Dorsolateral prefrontal cortex (tissue), 120 donors: ENCODE measurements at regions of chr12 and their contacts with region 1.

Region 1: GRCh38 chr12:12474931-12475795 is 87.5 kb downstream of the DUSP16 start:
- DNase-seq: no peak
- H3K4me3 ChIP-seq: peak overlapping the region in 1 of 59 donors; percentile 13
- H3K27ac ChIP-seq: peak overlapping the region in 58 of 59 donors; percentile 22 to 95 (median 88)
- H3K27me3 ChIP-seq: no peaks in the 10 kb centered on the region
- CTCF ChIP-seq: no peak

Region 2: DNA sequence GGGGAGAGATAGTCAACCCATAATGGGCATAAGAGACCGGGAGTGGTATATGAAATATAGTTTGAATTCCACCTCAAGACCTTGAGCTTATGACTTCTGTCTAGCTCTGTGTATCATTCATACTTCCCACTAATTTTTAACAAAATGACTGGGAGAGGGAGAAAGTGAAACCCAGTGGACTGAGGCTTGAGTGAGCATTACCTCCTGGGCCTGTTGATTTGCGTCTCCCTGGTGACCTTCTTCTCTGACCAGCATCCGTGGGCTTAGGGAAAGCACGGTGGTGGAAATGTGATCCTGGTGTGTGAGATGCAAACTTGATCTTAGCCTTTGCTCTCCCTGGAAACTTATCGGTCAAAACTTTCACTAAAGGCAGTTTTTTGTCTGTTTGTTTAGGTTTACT is 612.4 kb before region 1 on chr12:
- intact Hi-C with region 1: no loop called
- DNase-seq: no peak
- H3K4me3 ChIP-seq: peak overlapping the region in 1 of 59 donors; percentile 20
- H3K27ac ChIP-seq: peak overlapping the region in 54 of 59 donors; percentile 3 to 88 (median 74)
- H3K27me3 ChIP-seq: no peaks in the 10 kb centered on the region
- CTCF ChIP-seq: no peak

Region 3: DNA sequence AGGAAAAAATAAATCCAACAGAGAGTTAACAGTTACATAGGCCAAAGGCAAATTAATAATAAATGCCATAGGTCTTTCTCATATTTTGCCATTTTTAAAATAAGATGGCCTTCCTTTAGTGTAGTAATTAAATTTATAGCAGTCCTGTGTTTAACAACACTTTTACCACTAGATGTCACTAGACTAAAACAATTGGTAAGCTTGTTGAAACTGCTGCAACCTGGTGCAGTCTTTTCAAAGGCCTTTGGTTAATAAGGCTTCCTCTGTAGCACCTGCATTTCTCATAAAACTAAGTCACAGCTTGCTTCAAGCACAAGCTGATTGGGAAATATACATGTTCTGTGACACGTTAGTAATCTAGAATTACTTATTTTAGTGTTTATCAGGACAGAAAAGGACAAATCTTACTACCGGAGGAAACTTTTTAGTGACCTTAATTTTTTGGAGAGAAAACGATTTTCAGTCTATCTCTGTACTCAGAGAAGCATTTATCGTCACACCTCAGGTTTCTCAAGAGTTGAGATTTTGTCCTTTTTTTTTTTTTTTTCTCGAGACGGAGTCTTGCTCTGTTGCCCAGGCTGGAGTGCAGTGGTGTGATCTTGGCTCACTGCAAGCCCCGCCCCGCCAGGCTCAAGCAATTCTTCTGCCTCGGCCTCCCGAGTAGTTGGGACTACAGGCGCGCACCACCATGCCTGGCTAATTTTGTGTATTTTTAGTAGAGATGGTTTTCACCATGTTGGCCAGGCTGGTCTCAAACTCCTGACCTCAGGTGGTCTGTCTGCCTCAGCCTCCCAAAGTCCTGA is 98.3 kb before region 1 on chr12:
- intact Hi-C with region 1: loop called in 1 of 2 experiments (anchors 10 kb)
- DNase-seq: peak in 1 of 10 donors; percentile 13
- H3K4me3 ChIP-seq: no peak overlapping the region
- H3K27ac ChIP-seq: peak overlapping the region in 53 of 59 donors; percentile 8 to 84 (median 55)
- H3K27me3 ChIP-seq: no peaks in the 10 kb centered on the region
- CTCF ChIP-seq: peak; percentile 68 to 96 (median 84)

Region 4: GRCh38 chr12:12398026-12398859 is 76.9 kb before region 1 on chr12:
- intact Hi-C with region 1: loop called in 1 of 2 experiments (anchors 5 kb)
- DNase-seq: peak in 1 of 10 donors; percentile 61
- H3K4me3 ChIP-seq: peak overlapping the region in 1 of 59 donors; percentile 15
- H3K27ac ChIP-seq: peak overlapping the region in 58 of 59 donors; percentile 27 to 92 (median 79)
- H3K27me3 ChIP-seq: no peaks in the 10 kb centered on the region
- CTCF ChIP-seq: peak in 26 of 56 donors; percentile 7 to 39 (median 22)

Region 5: DNA sequence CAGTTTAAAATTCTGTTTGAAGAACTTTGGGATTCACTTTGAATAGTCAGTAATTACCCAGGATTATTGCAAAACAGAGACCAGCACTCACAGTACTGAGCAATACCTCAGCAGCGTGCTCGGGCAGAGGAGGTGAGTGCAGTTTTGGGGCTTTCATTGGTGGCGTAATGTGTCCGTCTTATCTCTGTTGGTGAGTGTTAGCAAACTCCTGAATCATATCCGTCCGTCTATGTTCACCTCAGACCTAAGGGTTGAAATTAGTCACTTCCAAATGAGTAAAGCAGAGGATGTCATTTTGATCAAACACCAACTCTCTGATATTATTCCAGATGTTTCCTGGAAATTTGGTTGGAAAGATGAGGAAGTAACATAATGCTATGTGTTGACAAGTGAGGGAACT is 35.5 kb before region 1 on chr12:
- intact Hi-C with region 1: loop called in 1 of 2 experiments (anchors 5 kb)
- DNase-seq: no peak
- H3K4me3 ChIP-seq: no peak overlapping the region
- H3K27ac ChIP-seq: no peak overlapping the region
- H3K27me3 ChIP-seq: no peaks in the 10 kb centered on the region
- CTCF ChIP-seq: no peak

Region 6: GRCh38 chr12:12505544-12506495 is 30.7 kb after region 1 on chr12:
- intact Hi-C with region 1: loop called in 1 of 2 experiments (anchors 5 kb)
- DNase-seq: no peak
- H3K4me3 ChIP-seq: peak overlapping the region in 44 of 59 donors; percentile 0 to 55 (median 34)
- H3K27ac ChIP-seq: peak overlapping the region; percentile 17 to 98 (median 86)
- H3K27me3 ChIP-seq: no peaks in the 10 kb centered on the region
- CTCF ChIP-seq: peak in 2 of 56 donors; percentile 13 to 17

Region 7: GRCh38 chr12:12661086-12661485 is 185.9 kb after region 1 on chr12:
- intact Hi-C with region 1: no loop called
- DNase-seq: no peak
- H3K4me3 ChIP-seq: peak overlapping the region in 1 of 59 donors; percentile 22
- H3K27ac ChIP-seq: peak overlapping the region in 23 of 59 donors; percentile 1 to 83 (median 33)
- H3K27me3 ChIP-seq: no peaks in the 10 kb centered on the region
- CTCF ChIP-seq: no peak